Heart right ventricle (tissue), 16 donors: ENCODE measurements at regions of chr4 and their contacts with region 1.

Region 1: GRCh38 chr4:55030589-55030988 is 94.8 kb downstream of the KDR start:
- DNase-seq: no peak
- ATAC-seq: no peak
- H3K4me3 ChIP-seq: no peak overlapping the region
- H3K27ac ChIP-seq: peak overlapping the region in 5 of 10 donors; percentile 16 to 73 (median 22)
- H3K4me1 ChIP-seq: peaks cover 2 to 53% (median 13%) of the 10 kb centered on the region in 9 donors
- H3K27me3 ChIP-seq: no peaks in the 10 kb centered on the region
- CTCF ChIP-seq: no peak

Region 2: DNA sequence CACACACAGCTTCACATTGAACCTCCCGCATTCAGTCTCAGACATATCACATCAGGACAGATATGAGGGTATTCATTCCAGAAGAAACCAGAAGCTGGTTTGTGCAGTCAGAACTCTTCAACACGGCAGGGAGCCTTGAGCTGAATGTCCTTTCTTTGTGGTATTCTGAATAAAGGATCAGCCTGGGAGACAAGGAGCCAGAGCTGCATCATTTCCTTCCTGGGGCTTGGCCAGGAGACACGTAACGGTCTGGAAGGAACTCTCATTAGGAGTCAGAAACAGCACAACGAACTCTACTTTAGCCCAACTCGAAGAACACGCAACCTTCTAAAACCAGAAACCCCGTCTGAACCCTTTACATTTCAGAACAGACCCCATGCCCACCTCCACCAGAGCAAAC is 48.4 kb after region 1 on chr4:
- intact Hi-C with region 1: loop called in 1 of 10 experiments (anchors 5 kb)
- DNase-seq: peak; percentile 62 to 86
- ATAC-seq: peak; percentile 81 to 95 (median 92)
- H3K4me3 ChIP-seq: peak overlapping the region in 2 of 10 donors; percentile 3 to 25
- H3K27ac ChIP-seq: peak overlapping the region; percentile 52 to 85 (median 80)
- H3K4me1 ChIP-seq: peaks cover 0 to 53% (median 21%) of the 10 kb centered on the region in 9 donors
- H3K27me3 ChIP-seq: no peaks in the 10 kb centered on the region
- CTCF ChIP-seq: no peak